Activated T-helper 2 cell treated with anti-CD3 and anti-CD28 coated beads, Interferon-gamma antibody, Interleukin-2, Interleukin-4, amounts not matched to agents 10 μg/mL and 5 μg/mL and 100 μg/mL, durations not matched to agents 14 hours and 24 hours and 36 hours (primary cell): ENCODE measurements at regions of chr18 and their contacts with region 1.

Region 1: DNA sequence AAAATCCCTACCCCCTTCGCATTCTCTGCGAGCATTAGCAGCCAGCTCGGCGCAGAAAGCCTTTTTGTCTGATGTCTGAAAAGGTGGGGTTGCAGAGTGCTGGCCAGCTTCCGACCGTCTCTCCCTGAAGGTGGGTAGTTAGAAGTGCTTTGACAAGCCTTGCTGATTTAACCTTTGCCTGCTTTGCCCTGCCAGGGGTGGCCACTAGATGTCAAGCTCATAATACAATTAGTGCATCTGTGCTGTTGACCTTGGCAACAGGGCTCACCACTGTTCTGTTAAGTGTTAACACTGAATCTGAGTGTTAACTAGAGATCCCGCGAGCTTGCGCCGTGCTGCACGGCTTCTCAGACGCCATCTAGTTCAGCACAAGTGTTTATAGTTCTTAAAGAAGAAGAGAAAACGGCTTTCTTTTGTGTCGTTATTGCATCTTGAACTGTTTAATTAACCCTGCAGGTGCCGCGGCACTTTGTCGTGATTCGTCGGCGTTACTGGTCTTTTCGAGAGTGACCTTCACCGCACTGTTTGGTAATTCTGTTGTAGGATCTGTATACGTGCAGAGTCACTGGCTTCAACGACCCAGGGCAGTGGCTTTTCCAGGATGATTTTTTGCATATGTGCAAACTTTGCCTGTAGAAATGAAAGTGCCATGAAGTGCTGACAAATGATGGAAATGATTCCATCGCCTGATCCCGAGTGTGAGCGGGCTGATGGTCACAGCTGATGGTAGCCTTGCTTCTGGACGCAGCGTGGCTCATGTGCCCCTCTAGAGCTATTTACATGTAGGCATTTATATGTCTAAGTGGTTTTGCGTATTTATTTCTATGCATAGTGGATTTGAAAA is 5.5 kb downstream of the SALL3 start:
- DNase-seq: no peak
- H3K4me3 Mint-ChIP-seq: no peak overlapping the region
- H3K27ac Mint-ChIP-seq: no peak overlapping the region
- H3K4me1 Mint-ChIP-seq: peaks cover 5% of the 10 kb centered on the region
- H3K27me3 Mint-ChIP-seq: peaks cover 67% of the 10 kb centered on the region

Region 2: GRCh38 chr18:78875268-78875997 is 109.7 kb before region 1 on chr18:
- intact Hi-C with region 1: loop called (anchors 5 kb)
- DNase-seq: no peak
- H3K4me3 Mint-ChIP-seq: no peak overlapping the region
- H3K27ac Mint-ChIP-seq: no peak overlapping the region
- H3K4me1 Mint-ChIP-seq: no peaks in the 10 kb centered on the region
- H3K27me3 Mint-ChIP-seq: peaks cover 1% of the 10 kb centered on the region

Region 3: GRCh38 chr18:79011300-79011870 is 26.2 kb after region 1 on chr18:
- intact Hi-C with region 1: no loop called
- DNase-seq: no peak
- H3K4me3 Mint-ChIP-seq: no peak overlapping the region
- H3K27ac Mint-ChIP-seq: no peak overlapping the region
- H3K4me1 Mint-ChIP-seq: no peaks in the 10 kb centered on the region
- H3K27me3 Mint-ChIP-seq: peaks cover 7% of the 10 kb centered on the region